ENCODE measurements at regions of chr9 and their contacts with region 1.

Region 1: GRCh38 chr9:98906262-98907040 is 37.3 kb upstream of the COL15A1 start:
- DNase-seq: no peak
- H3K4me3 ChIP-seq: no peak overlapping the region
- H3K27ac ChIP-seq: no peak overlapping the region
- H3K4me1 ChIP-seq: no peaks in the 10 kb centered on the region
- CTCF ChIP-seq: no peak

Region 2: GRCh38 chr9:98873951-98874371 is 32.5 kb before region 1 on chr9:
- CTCF ChIA-PET with region 1: no interaction called
- POLR2A ChIA-PET with region 1: no interaction called
- intact Hi-C with region 1: no loop called
- DNase-seq: no peak
- H3K4me3 ChIP-seq: no peak overlapping the region
- H3K27ac ChIP-seq: no peak overlapping the region
- H3K4me1 ChIP-seq: no peaks in the 10 kb centered on the region
- CTCF ChIP-seq: no peak

Region 3: DNA sequence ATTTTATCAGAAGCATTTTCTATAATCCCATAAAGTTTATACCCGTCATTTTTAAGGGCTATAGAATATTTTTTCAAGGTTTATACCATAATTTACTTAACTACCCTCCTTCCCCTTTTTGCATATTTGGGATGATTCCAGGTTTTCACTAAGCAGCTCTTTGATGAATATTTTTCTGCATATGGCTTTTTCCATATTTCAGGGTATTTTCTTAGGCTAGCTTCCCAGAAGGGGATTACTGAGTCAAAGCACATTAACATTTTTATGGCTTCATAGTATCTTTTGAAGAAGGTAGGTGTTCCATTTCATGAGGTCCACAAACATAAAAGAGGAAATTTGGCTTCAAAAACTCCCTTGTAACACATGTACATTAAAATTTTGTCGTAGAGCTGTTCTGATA is 22.6 kb after region 1 on chr9:
- CTCF ChIA-PET with region 1: no interaction called
- POLR2A ChIA-PET with region 1: no interaction called
- intact Hi-C with region 1: no loop called
- DNase-seq: no peak
- H3K4me3 ChIP-seq: no peak overlapping the region
- H3K27ac ChIP-seq: no peak overlapping the region
- H3K4me1 ChIP-seq: no peaks in the 10 kb centered on the region
- CTCF ChIP-seq: no peak

Region 4: GRCh38 chr9:99785010-99785590 is 878.6 kb after region 1 on chr9:
- CTCF ChIA-PET with region 1: no interaction called
- POLR2A ChIA-PET with region 1: no interaction called
- intact Hi-C with region 1: loop called (anchors 5 kb)
- DNase-seq: no peak
- H3K4me3 ChIP-seq: no peak overlapping the region
- H3K27ac ChIP-seq: no peak overlapping the region
- H3K4me1 ChIP-seq: no peaks in the 10 kb centered on the region
- CTCF ChIP-seq: no peak